Left colon (tissue), 2 donors: ENCODE measurements at regions of chr10 and their contacts with region 1.

Region 1: GRCh38 chr10:75117995-75118394 is 6.5 kb downstream of the SAMD8 start:
- DNase-seq: no peak
- ATAC-seq: no peak

Region 2: GRCh38 chr10:74683621-74684364 is 434.2 kb before region 1 on chr10:
- intact Hi-C with region 1: no loop called
- DNase-seq: no peak
- ATAC-seq: peak; percentile 10

Region 3: GRCh38 chr10:75229971-75230370 is 112.0 kb after region 1 on chr10:
- intact Hi-C with region 1: loop called in 1 of 2 experiments (anchors 5 kb)
- DNase-seq: peak in 1 of 2 donors; percentile 8
- ATAC-seq: no peak

Region 4: GRCh38 chr10:75417522-75417927 is 299.5 kb after region 1 on chr10:
- intact Hi-C with region 1: no loop called
- DNase-seq: no peak
- ATAC-seq: no peak